Heart right ventricle (tissue), 16 donors: ENCODE measurements at regions of chr4 and their contacts with region 1.

Region 1: GRCh38 chr4:40924096-40924792 is 174.5 kb downstream of the NSUN7 start:
- DNase-seq: peak; percentile 35 to 66
- ATAC-seq: peak in 7 of 8 donors; percentile 52 to 60 (median 54)
- H3K4me3 ChIP-seq: no peak overlapping the region
- H3K27ac ChIP-seq: peak overlapping the region in 1 of 10 donors; percentile 24
- H3K4me1 ChIP-seq: peaks cover 0 to 19% (median 5%) of the 10 kb centered on the region in 9 donors
- H3K27me3 ChIP-seq: no peaks in the 10 kb centered on the region
- CTCF ChIP-seq: peak; percentile 74 to 95 (median 79)

Region 2: DNA sequence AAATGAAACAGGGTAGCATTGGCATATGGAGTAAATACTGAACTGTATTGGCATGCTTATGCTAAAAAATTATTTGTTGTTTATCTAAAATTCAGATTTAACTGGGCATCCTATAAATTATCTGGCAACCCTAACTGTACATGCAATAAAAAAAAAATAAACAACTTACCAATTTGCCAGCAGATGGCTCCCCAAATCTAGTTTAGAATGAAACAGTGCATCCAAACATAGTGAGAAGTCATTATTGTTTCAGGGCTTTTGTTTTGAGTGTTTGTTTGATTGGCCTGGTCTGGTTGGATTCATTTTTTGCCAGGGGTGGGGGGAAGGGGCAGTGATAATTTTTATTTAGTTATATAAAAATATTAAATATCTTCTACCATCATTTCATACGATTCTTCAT is 187.3 kb before region 1 on chr4:
- intact Hi-C with region 1: loop called in 1 of 10 experiments (anchors 10 kb)
- DNase-seq: no peak
- ATAC-seq: no peak
- H3K4me3 ChIP-seq: no peak overlapping the region
- H3K27ac ChIP-seq: no peak overlapping the region
- H3K4me1 ChIP-seq: peaks cover 0 to 21% (median 2%) of the 10 kb centered on the region in 9 donors
- H3K27me3 ChIP-seq: peaks cover 0 to 9% (median 0%) of the 10 kb centered on the region in 7 donors
- CTCF ChIP-seq: peak in 7 of 9 donors; percentile 19 to 47 (median 40)

Region 3: GRCh38 chr4:40825014-40825838 is 99.0 kb before region 1 on chr4:
- intact Hi-C with region 1: no loop called
- DNase-seq: no peak
- ATAC-seq: no peak
- H3K4me3 ChIP-seq: no peak overlapping the region
- H3K27ac ChIP-seq: no peak overlapping the region
- H3K4me1 ChIP-seq: no peaks in the 10 kb centered on the region
- H3K27me3 ChIP-seq: no peaks in the 10 kb centered on the region
- CTCF ChIP-seq: no peak